OCI-LY7 (cell line): ENCODE measurements at regions of chr9 and their contacts with region 1.

Region 1: GRCh38 chr9:108761655-108762347 is 94.0 kb downstream of the ACTL7B start:
- DNase-seq: peak; percentile 51
- H3K4me3 ChIP-seq: no peak overlapping the region
- H3K27ac ChIP-seq: no peak overlapping the region
- H3K4me1 ChIP-seq: no peaks in the 10 kb centered on the region
- CTCF ChIP-seq: peak; percentile 93

Region 2: GRCh38 chr9:107425101-107426045 is 1336.4 kb before region 1 on chr9:
- CTCF ChIA-PET with region 1: no interaction called
- POLR2A ChIA-PET with region 1: no interaction called
- intact Hi-C with region 1: loop called (anchors 10 kb)
- DNase-seq: peak; percentile 34
- H3K4me3 ChIP-seq: no peak overlapping the region
- H3K27ac ChIP-seq: no peak overlapping the region
- H3K4me1 ChIP-seq: no peaks in the 10 kb centered on the region
- CTCF ChIP-seq: peak; percentile 82

Region 3: GRCh38 chr9:108468402-108468801 is 293.4 kb before region 1 on chr9:
- CTCF ChIA-PET with region 1: no interaction called
- POLR2A ChIA-PET with region 1: no interaction called
- intact Hi-C with region 1: loop called (anchors 2 kb)
- DNase-seq: peak; percentile 37
- H3K4me3 ChIP-seq: no peak overlapping the region
- H3K27ac ChIP-seq: no peak overlapping the region
- H3K4me1 ChIP-seq: no peaks in the 10 kb centered on the region
- CTCF ChIP-seq: peak; percentile 82

Region 4: DNA sequence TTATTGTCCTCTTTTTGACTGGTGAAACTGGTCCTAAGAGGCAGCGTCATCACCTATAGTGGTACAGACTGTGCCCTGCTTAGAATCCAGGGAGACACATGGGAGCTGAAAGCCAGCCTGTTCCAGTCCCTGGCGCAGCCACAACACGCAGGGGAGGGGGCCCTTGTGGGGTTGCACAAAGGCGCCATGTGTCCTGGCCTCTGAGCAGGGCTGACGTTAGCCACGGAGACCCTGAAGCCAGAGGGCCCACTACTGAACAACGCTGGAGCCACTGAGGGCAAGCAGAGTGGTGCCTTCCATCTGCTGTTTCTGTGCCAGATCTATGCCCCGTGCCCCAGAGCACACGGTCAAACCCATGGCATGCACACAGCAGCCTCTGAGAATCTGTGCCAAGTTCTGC is 53.4 kb before region 1 on chr9:
- CTCF ChIA-PET with region 1: no interaction called
- POLR2A ChIA-PET with region 1: no interaction called
- intact Hi-C with region 1: no loop called
- DNase-seq: no peak
- H3K4me3 ChIP-seq: no peak overlapping the region
- H3K27ac ChIP-seq: no peak overlapping the region
- H3K4me1 ChIP-seq: no peaks in the 10 kb centered on the region
- CTCF ChIP-seq: no peak

Region 5: DNA sequence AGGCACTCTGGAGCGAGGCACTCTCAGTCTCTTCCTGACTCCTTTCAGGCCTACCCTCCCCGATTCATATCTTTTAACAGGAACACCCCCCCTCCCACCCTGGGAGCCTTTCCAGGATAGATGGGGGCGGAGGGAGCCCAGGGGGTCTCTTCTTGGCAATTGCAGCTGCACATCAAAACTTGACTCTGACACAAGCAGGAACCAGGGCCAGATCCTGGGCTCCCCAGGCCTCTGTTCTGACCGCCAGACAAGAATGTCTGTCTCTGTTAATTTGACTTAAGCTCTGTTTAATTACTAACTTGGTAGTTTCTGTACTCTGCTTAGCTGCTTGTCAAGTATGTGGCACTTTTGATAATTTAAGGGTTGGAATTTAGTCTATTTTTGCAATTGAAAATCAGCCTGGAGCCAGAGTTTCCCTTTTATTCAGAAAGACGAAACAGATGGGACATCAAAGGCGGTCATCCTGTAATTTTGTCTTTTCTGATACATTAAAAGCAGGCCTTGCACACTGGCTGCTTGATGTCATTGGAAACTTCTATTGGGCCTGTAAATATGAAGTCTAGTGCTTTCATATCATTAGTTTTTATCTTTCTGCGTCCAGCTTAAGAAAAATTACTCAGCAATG is 50.7 kb after region 1 on chr9:
- CTCF ChIA-PET with region 1: no interaction called
- POLR2A ChIA-PET with region 1: no interaction called
- intact Hi-C with region 1: no loop called
- DNase-seq: no peak
- H3K4me3 ChIP-seq: no peak overlapping the region
- H3K27ac ChIP-seq: no peak overlapping the region
- H3K4me1 ChIP-seq: no peaks in the 10 kb centered on the region
- CTCF ChIP-seq: no peak

Region 6: DNA sequence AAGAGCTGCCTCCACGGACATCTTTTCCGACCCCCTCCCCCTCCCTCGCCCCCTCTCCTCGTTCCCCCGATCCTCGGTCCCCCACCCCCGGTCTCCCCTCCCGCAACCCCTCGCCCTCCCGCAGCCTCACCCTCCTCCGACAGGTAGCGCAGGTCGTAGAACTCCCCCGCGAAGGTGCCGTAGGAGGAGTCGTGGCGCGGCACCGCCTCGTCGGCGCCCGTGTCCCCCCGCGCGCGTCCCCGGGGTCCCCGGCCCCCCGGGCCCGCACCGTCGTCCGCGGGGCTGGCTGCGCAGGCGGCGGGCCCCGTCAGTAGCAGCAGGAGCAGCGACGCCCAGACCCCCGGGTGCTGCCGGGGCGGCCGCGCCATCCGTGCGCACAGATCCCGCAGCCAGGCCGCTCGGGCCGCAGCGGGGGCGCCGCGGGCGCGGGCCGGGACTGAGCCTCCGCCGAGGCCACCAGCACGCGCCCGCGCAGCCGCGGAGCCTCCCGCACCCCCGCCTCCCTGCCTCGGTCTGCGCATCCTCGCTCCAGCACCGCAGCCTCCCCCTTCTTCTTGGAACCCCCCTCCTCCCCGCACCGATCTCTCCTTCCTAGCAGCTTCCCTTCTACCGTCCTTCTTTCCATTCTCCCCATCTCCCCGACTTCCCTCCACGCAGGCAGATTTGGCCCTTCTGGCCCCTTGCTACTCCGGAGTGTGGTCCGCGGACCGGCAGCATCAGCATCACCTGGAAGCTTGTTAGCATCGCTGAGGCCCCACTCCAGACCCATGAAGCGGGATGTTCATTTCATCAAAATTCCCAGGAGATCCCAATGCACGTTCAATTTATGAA is 405.2 kb after region 1 on chr9 and contains the start of gene FRRS1L:
- CTCF ChIA-PET with region 1: interaction called, 13 read pairs
- POLR2A ChIA-PET with region 1: no interaction called
- intact Hi-C with region 1: no loop called
- DNase-seq: no peak
- H3K4me3 ChIP-seq: no peak within 1 kb of the TSS
- H3K27ac ChIP-seq: no peak within 1 kb of the TSS
- H3K4me1 ChIP-seq: peaks cover 10% of the 10 kb centered on the region
- CTCF ChIP-seq: no peak
- total RNA-seq, gene FRRS1L: not detected in 2 replicates